Right cardiac atrium (tissue), 5 donors: ENCODE measurements at regions of chr6 and their contacts with region 1.

Region 1: DNA sequence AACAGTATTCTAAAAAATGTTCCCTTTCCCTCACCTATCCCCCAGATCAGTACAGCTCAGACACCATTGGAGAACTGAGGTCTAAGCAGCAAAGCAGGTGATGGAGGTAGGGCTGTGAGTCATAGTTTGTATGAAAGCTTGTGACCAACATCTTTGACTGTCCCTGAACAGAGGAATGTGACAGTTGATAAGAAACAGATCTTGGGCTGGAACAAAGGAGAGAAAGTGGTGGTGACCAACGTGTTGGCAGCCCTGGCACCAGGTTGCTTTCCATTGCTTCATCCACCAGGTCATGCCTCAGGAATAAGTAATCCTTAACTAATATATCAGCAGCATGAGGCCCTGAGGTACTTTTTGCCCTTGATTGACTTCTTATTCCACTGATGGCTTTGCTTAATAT is 19.9 kb upstream of the CRIP3 start:
- DNase-seq: peak in 2 of 3 donors; percentile 59 to 63
- ATAC-seq: peak; percentile 82 to 90
- H3K4me3 ChIP-seq: no peak overlapping the region
- H3K27ac ChIP-seq: peak overlapping the region; percentile 18
- H3K4me1 ChIP-seq: no peaks in the 10 kb centered on the region
- H3K27me3 ChIP-seq: no peaks in the 10 kb centered on the region

Region 2: GRCh38 chr6:42505377-42505702 is 823.2 kb before region 1 on chr6:
- intact Hi-C with region 1: no loop called
- DNase-seq: no peak
- ATAC-seq: no peak
- H3K4me3 ChIP-seq: no peak overlapping the region
- H3K27ac ChIP-seq: no peak overlapping the region
- H3K4me1 ChIP-seq: no peaks in the 10 kb centered on the region
- H3K27me3 ChIP-seq: no peaks in the 10 kb centered on the region

Region 3: GRCh38 chr6:43185391-43185790 is 143.1 kb before region 1 on chr6:
- intact Hi-C with region 1: no loop called
- DNase-seq: no peak
- ATAC-seq: no peak
- H3K4me3 ChIP-seq: no peak overlapping the region
- H3K27ac ChIP-seq: no peak overlapping the region
- H3K4me1 ChIP-seq: no peaks in the 10 kb centered on the region
- H3K27me3 ChIP-seq: no peaks in the 10 kb centered on the region

Region 4: GRCh38 chr6:43269273-43270007 is 59.1 kb before region 1 on chr6:
- intact Hi-C with region 1: loop called in 3 of 4 experiments (anchors 5 to 10 kb)
- DNase-seq: peak in 1 of 3 donors; percentile 84
- ATAC-seq: peak; percentile 51 to 58
- H3K4me3 ChIP-seq: peak overlapping the region; percentile 7
- H3K27ac ChIP-seq: peak overlapping the region; percentile 69
- H3K4me1 ChIP-seq: peaks cover 13% of the 10 kb centered on the region
- H3K27me3 ChIP-seq: no peaks in the 10 kb centered on the region

Region 5: DNA sequence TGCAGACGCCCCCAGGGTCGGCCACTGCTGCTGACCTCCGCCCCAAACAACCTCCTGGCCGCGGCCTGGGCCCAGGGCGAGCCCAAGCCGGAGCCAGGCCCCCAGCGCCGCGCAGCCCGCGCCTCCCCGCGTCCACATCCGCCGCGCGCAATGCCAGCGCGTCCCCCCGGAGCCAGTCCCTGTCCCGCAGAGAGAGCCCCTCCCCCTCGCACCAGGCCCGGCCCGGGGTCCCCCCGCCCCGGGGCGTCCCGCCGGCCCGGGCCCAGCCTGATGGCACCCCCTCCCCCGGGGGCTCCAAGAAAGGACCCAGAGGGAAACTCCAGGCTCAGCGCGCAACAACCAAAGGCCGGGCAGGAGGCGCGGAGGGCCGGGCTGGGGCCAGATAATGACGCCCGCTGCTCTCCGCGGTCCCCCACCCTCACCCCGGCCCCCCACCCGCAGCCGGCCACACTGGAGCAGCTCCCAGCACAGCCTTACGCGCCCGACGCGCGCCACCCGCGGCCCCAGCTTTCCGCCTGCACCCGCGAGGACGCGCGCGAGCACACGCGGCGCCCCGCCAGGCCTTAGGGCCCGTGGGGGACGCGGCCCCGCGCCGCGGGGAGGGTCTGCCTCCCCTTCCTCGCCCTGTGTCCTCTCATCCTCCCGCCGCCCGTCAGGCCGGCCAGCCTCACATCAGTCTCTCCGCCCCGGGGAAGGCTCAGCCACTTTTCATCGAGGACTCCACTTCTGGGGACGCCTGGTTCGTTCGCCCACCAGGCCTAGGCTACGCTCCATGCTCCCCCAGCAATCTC is 43.3 kb before region 1 on chr6:
- intact Hi-C with region 1: no loop called
- DNase-seq: peak in 2 of 3 donors; percentile 10 to 37
- ATAC-seq: no peak
- H3K4me3 ChIP-seq: peak overlapping the region; percentile 23
- H3K27ac ChIP-seq: no peak overlapping the region
- H3K4me1 ChIP-seq: no peaks in the 10 kb centered on the region
- H3K27me3 ChIP-seq: no peaks in the 10 kb centered on the region